A549 (cell line): ENCODE measurements at regions of chr7 and their contacts with region 1.

Region 1: GRCh38 chr7:131068604-131069021 is 259.1 kb upstream of the MKLN1 start:
- DNase-seq: peak in 1 of 2 experiments; percentile 29
- ATAC-seq: peak; percentile 27 to 35; a peak in 3 of 6 replicates
- H3K4me3 ChIP-seq: no peak overlapping the region
- H3K27ac ChIP-seq: peak overlapping the region in 1 of 2 experiments; percentile 17; a peak in 2 of 6 replicates
- H3K4me1 ChIP-seq: peaks cover 59% of the 10 kb centered on the region
- CTCF ChIP-seq: no peak
- EP300 ChIP-seq: no peak
- POLR2A ChIP-seq: no peak
- RAD21 ChIP-seq: peak in 1 of 2 experiments; percentile 26; a peak in 1 of 5 replicates

Region 2: GRCh38 chr7:131057015-131057793 is 11.4 kb before region 1 on chr7:
- CTCF ChIA-PET with region 1: interaction called, 15 read pairs
- POLR2A ChIA-PET with region 1: no interaction called
- DNase-seq: no peak
- ATAC-seq: no peak
- H3K4me3 ChIP-seq: no peak overlapping the region
- H3K27ac ChIP-seq: no peak overlapping the region; a peak in 1 of 6 replicates
- H3K4me1 ChIP-seq: peaks cover 37% of the 10 kb centered on the region
- CTCF ChIP-seq: no peak
- EP300 ChIP-seq: no peak
- POLR2A ChIP-seq: no peak
- RAD21 ChIP-seq: no peak

Region 3: GRCh38 chr7:131124001-131124629 is 55.5 kb after region 1 on chr7:
- CTCF ChIA-PET with region 1: interaction called, 10 read pairs
- POLR2A ChIA-PET with region 1: no interaction called
- DNase-seq: no peak
- ATAC-seq: no peak; a peak in 1 of 6 replicates
- H3K4me3 ChIP-seq: no peak overlapping the region
- H3K27ac ChIP-seq: no peak overlapping the region
- H3K4me1 ChIP-seq: no peaks in the 10 kb centered on the region
- CTCF ChIP-seq: no peak
- EP300 ChIP-seq: no peak
- POLR2A ChIP-seq: no peak
- RAD21 ChIP-seq: no peak

Region 4: GRCh38 chr7:131203291-131203976 is 134.8 kb after region 1 on chr7:
- CTCF ChIA-PET with region 1: no interaction called
- POLR2A ChIA-PET with region 1: no interaction called
- DNase-seq: no peak
- ATAC-seq: no peak
- H3K4me3 ChIP-seq: no peak overlapping the region
- H3K27ac ChIP-seq: 0 out of 6 replicates have a peak overlapping the region, but pooled peaks of 1 of the 2 experiments have one; percentile 2
- H3K4me1 ChIP-seq: peaks cover 10% of the 10 kb centered on the region
- CTCF ChIP-seq: no peak
- EP300 ChIP-seq: no peak
- POLR2A ChIP-seq: no peak
- RAD21 ChIP-seq: no peak